ENCODE measurements at regions of chr3 and their contacts with region 1.

Region 1: DNA sequence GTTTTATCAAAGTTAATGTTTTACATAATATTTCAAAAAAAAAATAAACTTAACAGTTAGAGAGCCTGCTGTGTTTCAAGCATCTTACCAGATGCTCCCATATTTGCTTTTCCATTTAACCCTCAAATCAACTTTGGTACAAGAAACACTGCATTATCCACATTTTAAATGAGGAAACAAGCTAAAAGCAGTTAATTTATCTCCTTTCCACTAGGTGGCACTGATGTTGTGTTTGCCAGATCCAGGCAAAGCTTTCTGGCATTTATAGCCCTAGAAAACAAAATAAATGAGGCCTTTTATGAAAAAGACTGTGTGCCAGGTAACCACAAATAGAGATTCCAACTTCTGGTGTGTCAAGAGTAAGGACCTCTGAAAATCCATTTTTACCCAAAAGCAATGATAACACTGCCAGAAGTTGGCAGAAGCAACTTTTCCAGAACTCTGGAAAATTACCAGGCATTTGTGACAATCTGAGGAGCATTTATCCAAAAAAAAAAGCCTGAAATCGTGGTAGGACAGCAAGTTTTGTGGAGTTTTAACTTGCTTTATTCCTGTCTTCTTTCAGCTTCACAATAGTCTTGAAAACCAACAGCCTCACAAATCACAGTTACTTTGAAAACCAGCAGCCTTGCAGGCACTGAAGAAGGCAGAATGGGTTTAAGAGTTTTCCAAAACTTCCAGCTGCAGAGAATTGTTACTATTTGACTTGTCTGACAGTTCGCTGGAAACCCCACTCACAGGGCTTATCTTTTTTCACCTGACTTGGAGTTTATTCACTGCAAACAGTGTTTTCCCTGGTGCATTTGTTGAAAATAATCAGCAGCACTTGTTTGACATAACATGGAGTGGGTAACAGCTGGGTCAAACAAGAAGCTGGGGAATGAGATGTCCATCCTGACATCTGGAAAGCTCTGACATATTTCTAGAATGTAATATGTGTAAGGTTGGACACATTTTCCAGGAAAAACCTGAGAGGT is 9.2 kb downstream of the FAM162A start:
- DNase-seq: peak; percentile 72
- H3K4me3 Mint-ChIP-seq: no peak overlapping the region
- H3K27ac Mint-ChIP-seq: no peak overlapping the region
- H3K4me1 Mint-ChIP-seq: peaks cover 49% of the 10 kb centered on the region
- H3K27me3 Mint-ChIP-seq: no peaks in the 10 kb centered on the region

Region 2: DNA sequence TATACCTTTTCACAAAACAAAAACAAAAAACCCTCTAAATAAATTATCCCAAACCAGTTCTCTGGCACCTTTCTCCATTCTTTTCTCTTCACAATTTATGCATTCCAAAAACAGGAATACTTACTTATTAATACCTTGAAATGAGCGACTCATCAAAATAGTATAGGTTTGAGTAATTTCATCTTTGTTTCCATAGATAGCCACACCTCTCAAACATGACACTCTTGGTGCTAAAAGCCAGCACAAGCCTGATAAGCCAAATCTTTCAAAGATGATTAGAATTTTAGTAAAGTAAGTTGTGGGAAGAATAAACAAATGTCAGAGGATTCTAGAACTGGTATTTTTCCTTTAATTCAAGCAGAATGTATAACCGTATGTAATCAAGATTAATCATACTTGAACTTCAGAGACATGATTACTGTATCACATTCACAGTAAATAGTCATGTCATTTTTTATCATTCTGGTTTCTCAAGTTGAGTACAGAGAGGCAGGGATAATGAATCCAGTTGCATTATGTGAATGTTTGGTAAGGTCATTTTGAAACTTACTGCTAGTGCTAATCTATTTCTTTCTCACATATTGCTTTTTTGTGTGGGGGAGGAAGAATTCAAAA is 34.8 kb after region 1 on chr3:
- intact Hi-C with region 1: loop called (anchors 5 kb)
- DNase-seq: no peak
- H3K4me3 Mint-ChIP-seq: no peak overlapping the region
- H3K27ac Mint-ChIP-seq: peak overlapping the region; percentile 72
- H3K4me1 Mint-ChIP-seq: peaks cover 13% of the 10 kb centered on the region
- H3K27me3 Mint-ChIP-seq: no peaks in the 10 kb centered on the region